CD4-positive, alpha-beta memory T cell (primary cell): ENCODE measurements at regions of chr11 and their contacts with region 1.

Region 1: GRCh38 chr11:14907411-14908213 is 15.6 kb upstream of the CYP2R1 start:
- DNase-seq: peak; percentile 74 to 81 (median 76)
- H3K4me3 ChIP-seq: no peak overlapping the region
- H3K4me3 Mint-ChIP-seq: peak overlapping the region in 4 of 8 donors; percentile 21 to 53 (median 40)
- H3K27ac ChIP-seq: no peak overlapping the region
- H3K27ac Mint-ChIP-seq: peak overlapping the region; percentile 6 to 94 (median 69)
- H3K4me1 ChIP-seq: peaks cover 29% of the 10 kb centered on the region
- H3K4me1 Mint-ChIP-seq: peaks cover 22 to 50% (median 34%) of the 10 kb centered on the region in 4 donors
- H3K27me3 ChIP-seq: no peaks in the 10 kb centered on the region
- H3K27me3 Mint-ChIP-seq: no peaks in the 10 kb centered on the region

Region 2: GRCh38 chr11:14413307-14414069 is 494.1 kb before region 1 on chr11:
- CTCF ChIA-PET with region 1: no interaction called
- POLR2A ChIA-PET with region 1: no interaction called
- intact Hi-C with region 1: no loop called
- DNase-seq: no peak
- H3K4me3 ChIP-seq: no peak overlapping the region
- H3K4me3 Mint-ChIP-seq: no peak overlapping the region
- H3K27ac ChIP-seq: no peak overlapping the region
- H3K27ac Mint-ChIP-seq: peak overlapping the region in 5 of 7 donors; percentile 18 to 76 (median 35)
- H3K4me1 ChIP-seq: peaks cover 39% of the 10 kb centered on the region
- H3K4me1 Mint-ChIP-seq: peaks cover 18 to 57% (median 32%) of the 10 kb centered on the region in 4 donors
- H3K27me3 ChIP-seq: no peaks in the 10 kb centered on the region
- H3K27me3 Mint-ChIP-seq: no peaks in the 10 kb centered on the region

Region 3: DNA sequence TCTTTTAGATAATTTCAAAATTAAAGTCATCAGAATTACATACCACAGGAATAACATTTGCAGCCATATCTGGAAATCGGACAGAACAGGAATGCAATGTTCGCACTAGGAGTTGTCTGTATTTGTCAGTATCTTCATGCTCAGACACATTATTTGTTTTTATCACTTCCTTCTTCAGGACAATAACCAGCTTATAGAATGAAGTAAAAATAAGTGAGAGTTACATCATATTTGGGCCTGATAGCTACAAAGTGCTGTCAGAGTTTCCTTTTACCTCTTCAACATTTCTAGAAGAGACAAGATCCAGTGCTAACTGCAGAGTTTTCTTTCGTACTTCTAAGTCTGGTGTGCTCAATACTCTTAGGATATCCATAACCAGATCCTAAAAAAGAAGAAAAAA is 426.9 kb before region 1 on chr11:
- CTCF ChIA-PET with region 1: interaction called, 17 read pairs
- POLR2A ChIA-PET with region 1: no interaction called
- intact Hi-C with region 1: no loop called
- DNase-seq: no peak
- H3K4me3 ChIP-seq: no peak overlapping the region
- H3K4me3 Mint-ChIP-seq: no peak overlapping the region
- H3K27ac ChIP-seq: no peak overlapping the region
- H3K27ac Mint-ChIP-seq: no peak overlapping the region
- H3K4me1 ChIP-seq: no peaks in the 10 kb centered on the region
- H3K4me1 Mint-ChIP-seq: peaks cover 5 to 14% (median 10%) of the 10 kb centered on the region in 4 donors
- H3K27me3 ChIP-seq: no peaks in the 10 kb centered on the region
- H3K27me3 Mint-ChIP-seq: no peaks in the 10 kb centered on the region

Region 4: DNA sequence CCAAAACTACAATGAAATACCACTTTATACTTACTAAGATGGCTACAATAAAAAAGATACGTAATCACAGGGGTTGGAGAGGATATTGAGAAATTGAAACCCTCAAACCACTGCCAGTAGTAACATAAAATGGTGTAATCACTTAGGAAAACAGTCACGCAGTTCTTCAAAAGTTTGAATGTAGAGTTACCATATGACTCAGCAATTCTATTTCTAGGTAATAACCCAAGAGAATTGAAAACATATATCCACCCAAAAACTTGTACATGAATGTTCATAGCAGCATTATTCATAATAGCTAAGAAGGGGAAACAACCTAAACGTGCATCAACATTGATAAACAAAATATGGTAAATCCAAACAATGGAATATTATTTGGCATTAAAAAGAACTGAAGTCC is 363.0 kb before region 1 on chr11:
- CTCF ChIA-PET with region 1: interaction called, 40 read pairs
- POLR2A ChIA-PET with region 1: no interaction called
- intact Hi-C with region 1: no loop called
- DNase-seq: no peak
- H3K4me3 ChIP-seq: no peak overlapping the region
- H3K4me3 Mint-ChIP-seq: no peak overlapping the region
- H3K27ac ChIP-seq: no peak overlapping the region
- H3K27ac Mint-ChIP-seq: no peak overlapping the region
- H3K4me1 ChIP-seq: peaks cover 6% of the 10 kb centered on the region
- H3K4me1 Mint-ChIP-seq: peaks cover 0 to 12% (median 4%) of the 10 kb centered on the region in 4 donors
- H3K27me3 ChIP-seq: no peaks in the 10 kb centered on the region
- H3K27me3 Mint-ChIP-seq: no peaks in the 10 kb centered on the region

Region 5: GRCh38 chr11:14764579-14765527 is 142.8 kb before region 1 on chr11:
- CTCF ChIA-PET with region 1: interaction called, 45 read pairs
- POLR2A ChIA-PET with region 1: interaction called, 3 read pairs
- intact Hi-C with region 1: no loop called
- DNase-seq: peak; percentile 81 to 93 (median 90)
- H3K4me3 ChIP-seq: no peak overlapping the region
- H3K4me3 Mint-ChIP-seq: peak overlapping the region in 7 of 8 donors; percentile 44 to 81 (median 67)
- H3K27ac ChIP-seq: peak overlapping the region; percentile 53
- H3K27ac Mint-ChIP-seq: no peak overlapping the region
- H3K4me1 ChIP-seq: peaks cover 89% of the 10 kb centered on the region
- H3K4me1 Mint-ChIP-seq: peaks cover 18 to 40% (median 25%) of the 10 kb centered on the region in 4 donors
- H3K27me3 ChIP-seq: no peaks in the 10 kb centered on the region
- H3K27me3 Mint-ChIP-seq: no peaks in the 10 kb centered on the region

Region 6: GRCh38 chr11:14924318-14924717 is 16.7 kb after region 1 on chr11:
- CTCF ChIA-PET with region 1: interaction called, 97 read pairs
- POLR2A ChIA-PET with region 1: no interaction called
- intact Hi-C with region 1: no loop called
- DNase-seq: no peak
- H3K4me3 ChIP-seq: no peak overlapping the region
- H3K4me3 Mint-ChIP-seq: no peak overlapping the region
- H3K27ac ChIP-seq: no peak overlapping the region
- H3K27ac Mint-ChIP-seq: no peak overlapping the region
- H3K4me1 ChIP-seq: no peaks in the 10 kb centered on the region
- H3K4me1 Mint-ChIP-seq: no peaks in the 10 kb centered on the region
- H3K27me3 ChIP-seq: no peaks in the 10 kb centered on the region
- H3K27me3 Mint-ChIP-seq: peaks cover 0 to 2% of the 10 kb centered on the region in 2 donors

Region 7: DNA sequence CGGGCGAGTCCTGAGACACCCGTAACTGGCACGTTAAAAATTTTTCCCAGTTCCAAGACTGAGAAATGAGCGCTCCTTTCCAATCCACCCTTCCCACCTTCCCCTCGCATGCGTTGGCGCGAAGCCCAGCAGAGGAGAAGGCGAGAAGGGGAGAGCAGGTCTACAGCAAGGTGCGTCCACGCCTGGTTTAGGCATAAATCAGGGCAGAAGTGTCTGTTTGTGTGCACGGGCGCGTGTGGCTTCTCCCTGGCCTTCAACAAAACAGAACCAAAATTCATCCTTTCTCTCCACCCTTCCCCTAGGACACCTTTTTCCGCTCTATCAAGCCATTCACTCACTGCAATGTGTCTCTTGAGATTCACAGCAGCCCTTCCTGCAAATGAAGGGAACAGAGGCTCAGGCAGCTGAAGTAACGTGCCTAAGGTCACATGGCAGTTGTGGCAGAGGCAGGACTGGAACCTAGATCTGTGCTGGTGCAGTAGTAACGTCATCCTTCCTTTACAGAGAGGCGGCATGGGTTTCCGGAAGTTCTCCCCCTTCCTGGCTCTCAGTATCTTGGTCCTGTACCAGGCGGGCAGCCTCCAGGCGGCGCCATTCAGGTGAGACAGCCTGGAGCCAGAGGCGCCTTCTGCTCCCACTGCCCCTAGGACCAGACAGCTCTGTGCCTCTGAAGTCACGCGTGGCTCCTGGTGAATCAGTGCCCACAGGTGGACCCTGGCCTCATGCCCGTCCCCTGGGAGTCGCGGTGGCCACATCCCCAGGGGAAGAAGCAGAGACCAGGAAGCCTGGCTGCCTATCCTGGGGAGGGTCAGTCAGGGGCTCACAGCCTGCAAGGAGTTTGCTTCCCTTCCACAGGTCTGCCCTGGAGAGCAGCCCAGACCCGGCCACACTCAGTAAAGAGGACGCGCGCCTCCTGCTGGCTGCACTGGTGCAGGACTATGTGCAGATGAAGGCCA is 166.9 kb after region 1 on chr11:
- CTCF ChIA-PET with region 1: interaction called, 202 read pairs
- POLR2A ChIA-PET with region 1: interaction called, 17 read pairs
- intact Hi-C with region 1: loop called (anchors 1 kb)
- DNase-seq: peak; percentile 74 to 85 (median 76)
- H3K4me3 ChIP-seq: peak overlapping the region; percentile 54 to 57
- H3K4me3 Mint-ChIP-seq: peak overlapping the region; percentile 73 to 90 (median 84)
- H3K27ac ChIP-seq: no peak overlapping the region
- H3K27ac Mint-ChIP-seq: peak overlapping the region; percentile 52 to 79 (median 68)
- H3K4me1 ChIP-seq: peaks cover 17% of the 10 kb centered on the region
- H3K4me1 Mint-ChIP-seq: peaks cover 7 to 21% (median 15%) of the 10 kb centered on the region in 4 donors
- H3K27me3 ChIP-seq: peaks cover 3% of the 10 kb centered on the region
- H3K27me3 Mint-ChIP-seq: peaks cover 1 to 9% of the 10 kb centered on the region in 2 donors